GM12878 (cell line): ENCODE measurements at regions of chr5 and their contacts with region 1.

Region 1: GRCh38 chr5:132820162-132820754 is 7.2 kb downstream of the SOWAHA start:
- DNase-seq: peak; percentile 65
- ATAC-seq: peak; percentile 97
- H3K4me3 ChIP-seq: no peak overlapping the region
- H3K27ac ChIP-seq: no peak overlapping the region
- H3K4me1 ChIP-seq: no peaks in the 10 kb centered on the region; the same call in 1 of the 2 replicates
- H3K27me3 ChIP-seq: no peaks in the 10 kb centered on the region; a peak in 2 of 4 replicates
- CTCF ChIP-seq: peak; percentile 89 to 94 (median 89)
- EP300 ChIP-seq: no peak
- POLR2A ChIP-seq: no peak
- RAD21 ChIP-seq: peak; percentile 87

Region 2: DNA sequence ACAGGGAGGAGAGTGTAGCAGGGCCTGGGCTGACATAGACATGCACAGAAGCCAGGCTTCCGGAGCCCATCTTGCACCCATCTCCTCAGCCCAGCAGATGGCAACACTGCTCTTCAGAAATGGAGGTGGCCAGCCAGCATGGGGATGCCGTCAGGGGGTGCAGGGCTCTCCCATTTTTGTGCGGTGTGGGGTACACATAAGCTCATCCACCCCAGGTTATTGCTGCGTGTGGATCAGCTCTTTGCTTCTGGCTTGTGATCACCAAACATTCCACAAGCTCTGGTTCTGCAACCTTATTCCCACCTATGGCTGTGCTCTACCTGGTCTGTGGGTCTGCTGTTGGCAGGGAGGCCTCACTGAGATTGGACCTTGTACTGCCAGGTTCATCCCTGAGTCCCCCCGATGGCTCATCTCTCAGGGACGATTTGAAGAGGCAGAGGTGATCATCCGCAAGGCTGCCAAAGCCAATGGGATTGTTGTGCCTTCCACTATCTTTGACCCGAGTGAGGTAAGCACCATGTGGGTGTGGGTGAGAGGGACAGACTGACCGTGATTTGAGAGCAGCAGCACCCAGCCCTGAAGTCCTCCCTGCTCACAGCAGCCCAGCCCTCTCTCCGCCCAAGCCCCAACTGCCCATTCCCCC is 433.5 kb before region 1 on chr5:
- CTCF ChIA-PET with region 1: interaction called, 21 read pairs
- POLR2A ChIA-PET with region 1: no interaction called
- RAD21 ChIA-PET with region 1: interaction called, 7 read pairs
- SMC1A ChIA-PET with region 1: interaction called, 3 read pairs
- in situ Hi-C with region 1: loop called (anchors 5 kb)
- intact Hi-C with region 1: loop called (anchors 1 kb)
- DNase-seq: peak; percentile 70
- ATAC-seq: peak; percentile 96
- H3K4me3 ChIP-seq: no peak overlapping the region
- H3K27ac ChIP-seq: no peak overlapping the region
- H3K4me1 ChIP-seq: peaks cover 20% of the 10 kb centered on the region
- H3K27me3 ChIP-seq: no peaks in the 10 kb centered on the region
- CTCF ChIP-seq: peak; percentile 86 to 97 (median 93)
- EP300 ChIP-seq: no peak
- POLR2A ChIP-seq: no peak
- RAD21 ChIP-seq: peak; percentile 91

Region 3: GRCh38 chr5:132591145-132591544 is 229.1 kb before region 1 on chr5:
- CTCF ChIA-PET with region 1: interaction called, 19 read pairs
- POLR2A ChIA-PET with region 1: no interaction called
- RAD21 ChIA-PET with region 1: interaction called, 17 read pairs
- SMC1A ChIA-PET with region 1: interaction called, 9 read pairs
- in situ Hi-C with region 1: no loop called
- intact Hi-C with region 1: loop called (anchors 5 kb)
- DNase-seq: no peak
- ATAC-seq: peak; percentile 54; the same call in 2 of the 3 replicates
- H3K4me3 ChIP-seq: no peak overlapping the region
- H3K27ac ChIP-seq: no peak overlapping the region
- H3K4me1 ChIP-seq: no peaks in the 10 kb centered on the region
- H3K27me3 ChIP-seq: no peaks in the 10 kb centered on the region
- CTCF ChIP-seq: peak in 2 of 3 experiments; percentile 31 to 59; a peak in 3 of 6 replicates
- EP300 ChIP-seq: no peak
- POLR2A ChIP-seq: no peak
- RAD21 ChIP-seq: peak; percentile 69

Region 4: DNA sequence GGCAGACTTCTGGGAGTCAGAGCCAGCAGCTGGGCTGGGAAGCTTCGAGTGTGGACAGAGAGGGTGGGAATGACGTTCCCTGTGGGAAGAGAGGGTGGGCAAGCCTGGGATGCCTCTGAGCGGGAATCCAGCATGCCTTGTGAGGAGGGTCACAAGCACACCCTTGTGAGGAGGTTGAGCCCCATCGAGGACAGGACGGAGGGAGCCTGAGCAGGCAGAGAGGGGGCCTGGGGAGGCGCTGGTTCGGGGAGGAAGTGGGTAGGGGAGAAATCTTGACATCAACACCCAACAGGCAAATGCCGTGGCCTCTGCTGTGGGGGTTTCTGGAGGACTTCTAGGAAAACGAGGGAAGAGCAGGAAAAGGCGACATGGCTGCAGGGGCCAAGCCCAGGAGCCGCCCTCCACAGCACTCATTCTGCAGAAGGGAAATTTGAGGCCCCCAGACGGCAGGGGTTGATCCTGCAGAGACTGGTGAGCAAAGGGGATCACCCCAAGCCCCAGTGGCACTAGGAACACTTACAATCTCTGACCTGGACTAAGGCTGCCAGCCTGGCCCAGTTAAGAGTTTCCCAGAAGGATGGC is 163.4 kb before region 1 on chr5:
- CTCF ChIA-PET with region 1: interaction called, 58 read pairs
- POLR2A ChIA-PET with region 1: no interaction called
- RAD21 ChIA-PET with region 1: interaction called, 30 read pairs
- SMC1A ChIA-PET with region 1: interaction called, 55 read pairs
- in situ Hi-C with region 1: no loop called
- intact Hi-C with region 1: no loop called
- DNase-seq: no peak
- ATAC-seq: peak; percentile 5; the same call in 1 of the 3 replicates
- H3K4me3 ChIP-seq: 0 out of 2 replicates have a peak overlapping the region, but pooled peaks have one; percentile 47
- H3K27ac ChIP-seq: no peak overlapping the region
- H3K4me1 ChIP-seq: peaks cover 45% of the 10 kb centered on the region
- H3K27me3 ChIP-seq: no peaks in the 10 kb centered on the region
- CTCF ChIP-seq: no peak
- EP300 ChIP-seq: no peak
- POLR2A ChIP-seq: no peak
- RAD21 ChIP-seq: no peak

Region 5: GRCh38 chr5:132714456-132715307 is 105.6 kb before region 1 on chr5:
- CTCF ChIA-PET with region 1: interaction called, 11 read pairs
- POLR2A ChIA-PET with region 1: interaction called, 3 read pairs
- RAD21 ChIA-PET with region 1: interaction called, 6 read pairs
- SMC1A ChIA-PET with region 1: interaction called, 10 read pairs
- in situ Hi-C with region 1: no loop called
- intact Hi-C with region 1: no loop called
- DNase-seq: no peak
- ATAC-seq: peak; percentile 64
- H3K4me3 ChIP-seq: no peak overlapping the region
- H3K27ac ChIP-seq: no peak overlapping the region
- H3K4me1 ChIP-seq: no peaks in the 10 kb centered on the region
- H3K27me3 ChIP-seq: no peaks in the 10 kb centered on the region
- CTCF ChIP-seq: peak in 1 of 3 experiments; percentile 28; a peak in 2 of 6 replicates
- EP300 ChIP-seq: no peak
- POLR2A ChIP-seq: no peak
- RAD21 ChIP-seq: 0 out of 2 replicates have a peak, but pooled peaks have one; percentile 8

Region 6: GRCh38 chr5:132753135-132753987 is 66.9 kb before region 1 on chr5:
- CTCF ChIA-PET with region 1: interaction called, 136 read pairs
- POLR2A ChIA-PET with region 1: interaction called, 11 read pairs
- RAD21 ChIA-PET with region 1: interaction called, 42 read pairs
- SMC1A ChIA-PET with region 1: interaction called, 129 read pairs
- in situ Hi-C with region 1: no loop called
- intact Hi-C with region 1: loop called (anchors 2 kb)
- DNase-seq: no peak
- ATAC-seq: peak; percentile 42
- H3K4me3 ChIP-seq: no peak overlapping the region
- H3K27ac ChIP-seq: no peak overlapping the region
- H3K4me1 ChIP-seq: peaks cover 25% of the 10 kb centered on the region
- H3K27me3 ChIP-seq: no peaks in the 10 kb centered on the region
- CTCF ChIP-seq: peak; percentile 6 to 44 (median 15); a peak in 3 of 6 replicates
- EP300 ChIP-seq: no peak
- POLR2A ChIP-seq: no peak
- RAD21 ChIP-seq: peak; percentile 27; the same call in 1 of the 2 replicates

Region 7: DNA sequence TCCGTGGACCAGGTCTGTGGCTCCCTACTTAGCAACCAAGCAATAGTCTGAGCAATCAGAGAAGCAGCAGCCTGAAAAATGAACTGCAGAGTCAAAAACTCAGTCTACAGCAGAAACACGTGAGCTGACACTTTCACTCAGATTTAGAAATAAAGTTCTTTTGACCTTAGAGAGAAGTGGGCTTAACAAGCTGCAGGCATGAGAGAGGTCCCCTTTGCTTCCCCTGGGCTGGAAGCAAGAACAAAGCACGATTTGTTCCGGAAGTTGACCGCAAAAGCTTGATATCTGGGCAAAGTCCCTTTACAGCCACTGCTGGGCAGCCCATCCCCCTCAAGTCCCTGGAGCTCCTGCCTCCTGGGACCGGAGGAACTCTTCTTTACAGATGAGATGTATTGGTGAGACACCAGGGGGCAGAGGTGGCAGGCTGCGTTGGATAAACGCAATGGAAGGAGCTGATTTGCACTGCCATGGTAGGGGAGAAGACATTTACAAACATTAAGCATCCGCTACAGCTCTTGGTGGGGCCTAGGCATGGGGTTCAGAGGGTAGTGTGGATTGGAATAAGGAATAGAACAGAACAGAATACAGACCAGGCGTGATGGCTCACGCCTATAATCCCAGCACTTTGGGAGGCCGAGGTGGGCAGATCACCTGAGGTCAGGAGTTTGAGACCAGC is 13.0 kb before region 1 on chr5:
- CTCF ChIA-PET with region 1: interaction called, 159 read pairs
- POLR2A ChIA-PET with region 1: interaction called, 41 read pairs
- RAD21 ChIA-PET with region 1: interaction called, 106 read pairs
- SMC1A ChIA-PET with region 1: interaction called, 99 read pairs
- in situ Hi-C with region 1: no loop called
- intact Hi-C with region 1: no loop called
- DNase-seq: peak; percentile 20
- ATAC-seq: peak; percentile 94
- H3K4me3 ChIP-seq: no peak overlapping the region
- H3K27ac ChIP-seq: no peak overlapping the region
- H3K4me1 ChIP-seq: no peaks in the 10 kb centered on the region
- H3K27me3 ChIP-seq: peaks cover 0 to 4% of the 10 kb centered on the region in 2 experiments; a peak in 2 of 4 replicates
- CTCF ChIP-seq: peak; percentile 3 to 45 (median 36); a peak in 3 of 6 replicates
- EP300 ChIP-seq: peak; percentile 17 to 59; a peak in 2 of 4 replicates
- POLR2A ChIP-seq: no peak
- RAD21 ChIP-seq: no peak